GM12878 (cell line): ENCODE measurements at regions of chr4 and their contacts with region 1.

Region 1: GRCh38 chr4:42995343-42995944 is 102.9 kb downstream of the GRXCR1 start:
- DNase-seq: no peak
- ATAC-seq: peak; percentile 84
- H3K4me3 ChIP-seq: no peak overlapping the region
- H3K27ac ChIP-seq: no peak overlapping the region
- H3K4me1 ChIP-seq: no peaks in the 10 kb centered on the region
- H3K27me3 ChIP-seq: no peaks in the 10 kb centered on the region
- CTCF ChIP-seq: peak; percentile 68 to 73 (median 69)
- EP300 ChIP-seq: no peak
- POLR2A ChIP-seq: no peak
- RAD21 ChIP-seq: peak; percentile 81

Region 2: DNA sequence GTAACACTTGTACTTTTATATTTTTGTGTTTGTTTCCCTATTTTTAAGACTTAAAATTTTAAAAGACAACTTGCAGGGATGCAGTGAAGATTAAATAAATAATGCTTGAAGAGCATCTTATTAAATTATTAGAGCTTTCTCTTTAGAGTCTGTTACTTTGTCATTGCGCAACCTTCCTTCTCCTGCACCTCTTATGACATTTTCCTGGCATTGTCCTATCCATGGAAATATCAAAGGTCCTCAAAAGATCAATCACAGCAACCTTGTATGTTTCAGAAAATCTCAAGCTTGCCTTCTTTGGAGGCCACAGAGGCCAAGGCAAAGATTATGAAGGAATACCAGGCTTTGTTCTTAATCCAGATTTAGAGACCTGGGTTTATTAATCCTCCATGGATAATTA is 13.3 kb after region 1 on chr4:
- CTCF ChIA-PET with region 1: no interaction called
- POLR2A ChIA-PET with region 1: no interaction called
- RAD21 ChIA-PET with region 1: no interaction called
- SMC1A ChIA-PET with region 1: no interaction called
- in situ Hi-C with region 1: no loop called
- intact Hi-C with region 1: no loop called
- DNase-seq: no peak
- ATAC-seq: no peak
- H3K4me3 ChIP-seq: no peak overlapping the region
- H3K27ac ChIP-seq: no peak overlapping the region
- H3K4me1 ChIP-seq: no peaks in the 10 kb centered on the region
- H3K27me3 ChIP-seq: no peaks in the 10 kb centered on the region
- CTCF ChIP-seq: no peak
- EP300 ChIP-seq: no peak
- POLR2A ChIP-seq: no peak
- RAD21 ChIP-seq: no peak

Region 3: GRCh38 chr4:43471950-43472349 is 476.5 kb after region 1 on chr4:
- CTCF ChIA-PET with region 1: no interaction called
- POLR2A ChIA-PET with region 1: no interaction called
- RAD21 ChIA-PET with region 1: no interaction called
- SMC1A ChIA-PET with region 1: no interaction called
- in situ Hi-C with region 1: no loop called
- intact Hi-C with region 1: loop called (anchors 5 kb)
- DNase-seq: no peak
- ATAC-seq: no peak
- H3K4me3 ChIP-seq: no peak overlapping the region
- H3K27ac ChIP-seq: no peak overlapping the region
- H3K4me1 ChIP-seq: no peaks in the 10 kb centered on the region
- H3K27me3 ChIP-seq: no peaks in the 10 kb centered on the region
- CTCF ChIP-seq: peak in 1 of 3 experiments; percentile 24; a peak in 3 of 6 replicates
- EP300 ChIP-seq: no peak
- POLR2A ChIP-seq: no peak
- RAD21 ChIP-seq: peak; percentile 49

Region 4: GRCh38 chr4:44493924-44494323 is 1498.5 kb after region 1 on chr4:
- CTCF ChIA-PET with region 1: no interaction called
- POLR2A ChIA-PET with region 1: no interaction called
- RAD21 ChIA-PET with region 1: no interaction called
- SMC1A ChIA-PET with region 1: no interaction called
- in situ Hi-C with region 1: no loop called
- intact Hi-C with region 1: loop called (anchors 10 kb)
- DNase-seq: no peak
- ATAC-seq: peak; percentile 50; the same call in 2 of the 3 replicates
- H3K4me3 ChIP-seq: no peak overlapping the region
- H3K27ac ChIP-seq: no peak overlapping the region
- H3K4me1 ChIP-seq: no peaks in the 10 kb centered on the region
- H3K27me3 ChIP-seq: no peaks in the 10 kb centered on the region
- CTCF ChIP-seq: peak; percentile 28 to 48 (median 45); a peak in 5 of 6 replicates
- EP300 ChIP-seq: no peak
- POLR2A ChIP-seq: no peak
- RAD21 ChIP-seq: peak; percentile 27; the same call in 1 of the 2 replicates